CD8-positive, alpha-beta T cell (primary cell): ENCODE measurements at regions of chr4 and their contacts with region 1.

Region 1: GRCh38 chr4:68324519-68325262 is 25.2 kb downstream of the YTHDC1 start:
- DNase-seq: no peak
- ATAC-seq: no peak
- H3K4me3 ChIP-seq: no peak overlapping the region
- H3K4me3 Mint-ChIP-seq: no peak overlapping the region
- H3K27ac ChIP-seq: no peak overlapping the region
- H3K27ac Mint-ChIP-seq: no peak overlapping the region
- H3K4me1 ChIP-seq: no peaks in the 10 kb centered on the region
- H3K4me1 Mint-ChIP-seq: peaks cover 15% of the 10 kb centered on the region
- H3K27me3 ChIP-seq: no peaks in the 10 kb centered on the region
- H3K27me3 Mint-ChIP-seq: no peaks in the 10 kb centered on the region
- CTCF ChIP-seq: no peak

Region 2: GRCh38 chr4:67499799-67500198 is 824.9 kb before region 1 on chr4:
- CTCF ChIA-PET with region 1: no interaction called
- POLR2A ChIA-PET with region 1: no interaction called
- intact Hi-C with region 1: loop called in 1 of 2 experiments (anchors 10 kb)
- DNase-seq: no peak
- ATAC-seq: no peak
- H3K4me3 ChIP-seq: no peak overlapping the region
- H3K4me3 Mint-ChIP-seq: no peak overlapping the region
- H3K27ac ChIP-seq: no peak overlapping the region
- H3K27ac Mint-ChIP-seq: no peak overlapping the region
- H3K4me1 ChIP-seq: no peaks in the 10 kb centered on the region
- H3K4me1 Mint-ChIP-seq: peaks cover 12% of the 10 kb centered on the region
- H3K27me3 ChIP-seq: no peaks in the 10 kb centered on the region
- H3K27me3 Mint-ChIP-seq: no peaks in the 10 kb centered on the region
- CTCF ChIP-seq: no peak

Region 3: GRCh38 chr4:67522851-67523671 is 801.6 kb before region 1 on chr4:
- CTCF ChIA-PET with region 1: no interaction called
- POLR2A ChIA-PET with region 1: no interaction called
- intact Hi-C with region 1: loop called in 1 of 2 experiments (anchors 10 kb)
- DNase-seq: peak in 2 of 9 experiments; percentile 19 to 47
- ATAC-seq: peak; percentile 72
- H3K4me3 ChIP-seq: no peak overlapping the region
- H3K4me3 Mint-ChIP-seq: no peak overlapping the region
- H3K27ac ChIP-seq: no peak overlapping the region
- H3K27ac Mint-ChIP-seq: peak overlapping the region; percentile 37
- H3K4me1 ChIP-seq: peaks cover 6% of the 10 kb centered on the region
- H3K4me1 Mint-ChIP-seq: peaks cover 72% of the 10 kb centered on the region
- H3K27me3 ChIP-seq: no peaks in the 10 kb centered on the region
- H3K27me3 Mint-ChIP-seq: no peaks in the 10 kb centered on the region
- CTCF ChIP-seq: no peak

Region 4: DNA sequence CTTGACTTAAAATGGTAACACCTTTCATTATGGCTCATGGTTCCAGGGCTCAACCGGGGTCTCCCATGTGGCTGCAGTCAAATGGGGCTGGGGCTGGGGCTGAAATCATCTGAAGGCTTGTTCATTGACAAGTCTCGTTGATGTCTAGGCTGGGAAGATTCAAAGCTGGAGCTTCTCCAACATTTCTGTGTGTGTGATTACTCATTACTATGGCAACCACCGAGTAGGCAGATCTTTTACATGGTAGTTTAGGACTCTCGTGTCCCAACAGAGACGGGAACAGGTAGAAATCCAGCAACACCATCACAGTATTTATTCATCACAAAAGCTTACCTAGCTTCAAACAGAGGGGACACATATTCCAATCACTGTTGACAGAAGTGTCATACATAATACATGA is 17.4 kb after region 1 on chr4:
- CTCF ChIA-PET with region 1: no interaction called
- POLR2A ChIA-PET with region 1: no interaction called
- intact Hi-C with region 1: loop called (anchors 2 kb)
- DNase-seq: peak in 1 of 9 experiments; percentile 20
- ATAC-seq: no peak
- H3K4me3 ChIP-seq: no peak overlapping the region
- H3K4me3 Mint-ChIP-seq: peak overlapping the region; percentile 47
- H3K27ac ChIP-seq: peak overlapping the region in 1 of 2 experiments; percentile 31
- H3K27ac Mint-ChIP-seq: peak overlapping the region; percentile 46
- H3K4me1 ChIP-seq: peaks cover 77% of the 10 kb centered on the region
- H3K4me1 Mint-ChIP-seq: peaks cover 88% of the 10 kb centered on the region
- H3K27me3 ChIP-seq: no peaks in the 10 kb centered on the region
- H3K27me3 Mint-ChIP-seq: no peaks in the 10 kb centered on the region
- CTCF ChIP-seq: no peak

Region 5: GRCh38 chr4:69445388-69445787 is 1120.7 kb after region 1 on chr4:
- CTCF ChIA-PET with region 1: no interaction called
- POLR2A ChIA-PET with region 1: no interaction called
- intact Hi-C with region 1: no loop called
- DNase-seq: no peak
- ATAC-seq: no peak
- H3K4me3 ChIP-seq: no peak overlapping the region
- H3K4me3 Mint-ChIP-seq: no peak overlapping the region
- H3K27ac ChIP-seq: no peak overlapping the region
- H3K27ac Mint-ChIP-seq: no peak overlapping the region
- H3K4me1 ChIP-seq: no peaks in the 10 kb centered on the region
- H3K4me1 Mint-ChIP-seq: no peaks in the 10 kb centered on the region
- H3K27me3 ChIP-seq: no peaks in the 10 kb centered on the region
- H3K27me3 Mint-ChIP-seq: no peaks in the 10 kb centered on the region
- CTCF ChIP-seq: no peak